Heart left ventricle (tissue), 16 donors: ENCODE measurements at regions of chr10 and their contacts with region 1.

Region 1: GRCh38 chr10:7121154-7121810 is 289.6 kb downstream of the SFMBT2 start:
- DNase-seq: peak in 4 of 5 donors; percentile 28 to 45 (median 40)
- ATAC-seq: peak in 3 of 4 donors; percentile 60 to 66 (median 61)
- H3K4me3 ChIP-seq: no peak overlapping the region
- H3K27ac ChIP-seq: no peak overlapping the region
- H3K4me1 ChIP-seq: peaks cover 0 to 2% (median 0%) of the 10 kb centered on the region in 12 donors
- H3K27me3 ChIP-seq: peaks cover 0 to 12% (median 0%) of the 10 kb centered on the region in 9 donors
- CTCF ChIP-seq: peak; percentile 48 to 75 (median 68)
- POLR2A ChIP-seq: no peak

Region 2: GRCh38 chr10:6920072-6921019 is 200.9 kb before region 1 on chr10:
- intact Hi-C with region 1: loop called in 1 of 10 experiments (anchors 10 kb)
- DNase-seq: peak; percentile 53 to 86 (median 69)
- ATAC-seq: peak; percentile 73 to 95 (median 92)
- H3K4me3 ChIP-seq: peak overlapping the region in 1 of 12 donors; percentile 7
- H3K27ac ChIP-seq: no peak overlapping the region
- H3K4me1 ChIP-seq: peaks cover 0 to 19% (median 1%) of the 10 kb centered on the region in 12 donors
- H3K27me3 ChIP-seq: peaks cover 0 to 3% (median 0%) of the 10 kb centered on the region in 9 donors
- CTCF ChIP-seq: peak; percentile 28 to 69 (median 59)
- POLR2A ChIP-seq: no peak

Region 3: GRCh38 chr10:7102557-7103349 is 18.5 kb before region 1 on chr10:
- intact Hi-C with region 1: no loop called
- DNase-seq: no peak
- ATAC-seq: no peak
- H3K4me3 ChIP-seq: no peak overlapping the region
- H3K27ac ChIP-seq: no peak overlapping the region
- H3K4me1 ChIP-seq: peaks cover 0 to 5% (median 0%) of the 10 kb centered on the region in 12 donors
- H3K27me3 ChIP-seq: peaks cover 0 to 3% (median 0%) of the 10 kb centered on the region in 9 donors
- CTCF ChIP-seq: no peak
- POLR2A ChIP-seq: no peak

Region 4: DNA sequence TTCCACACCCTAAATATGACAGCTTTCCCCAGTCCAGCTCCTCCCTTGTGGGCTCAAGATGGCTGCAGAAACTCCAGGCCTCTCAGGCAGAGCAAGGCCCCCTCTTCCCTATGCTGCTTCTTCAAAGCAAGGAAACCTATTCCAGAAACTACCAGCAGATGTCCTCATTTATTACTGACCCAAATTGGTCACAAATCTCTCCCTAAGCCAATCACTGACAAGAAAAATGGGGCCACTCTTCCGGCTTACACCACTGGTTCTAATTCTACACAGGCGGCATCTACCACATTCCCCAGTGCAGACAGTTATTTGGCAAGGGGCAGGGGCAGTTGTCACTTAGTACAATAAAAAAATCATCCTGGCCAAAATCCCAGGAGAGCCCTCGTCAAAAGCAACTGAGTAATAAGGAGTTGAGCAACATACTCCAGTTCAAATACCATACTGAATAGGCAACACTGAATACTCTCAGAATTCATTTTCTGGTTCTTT is 139.2 kb after region 1 on chr10:
- intact Hi-C with region 1: loop called in 2 of 10 experiments (anchors 10 kb)
- DNase-seq: peak in 4 of 5 donors; percentile 73 to 87 (median 80)
- ATAC-seq: peak; percentile 94 to 96 (median 96)
- H3K4me3 ChIP-seq: no peak overlapping the region
- H3K27ac ChIP-seq: peak overlapping the region; percentile 17 to 72 (median 60)
- H3K4me1 ChIP-seq: peaks cover 3 to 55% (median 26%) of the 10 kb centered on the region in 12 donors
- H3K27me3 ChIP-seq: no peaks in the 10 kb centered on the region
- CTCF ChIP-seq: peak; percentile 65 to 88 (median 78)
- POLR2A ChIP-seq: no peak

Region 5: DNA sequence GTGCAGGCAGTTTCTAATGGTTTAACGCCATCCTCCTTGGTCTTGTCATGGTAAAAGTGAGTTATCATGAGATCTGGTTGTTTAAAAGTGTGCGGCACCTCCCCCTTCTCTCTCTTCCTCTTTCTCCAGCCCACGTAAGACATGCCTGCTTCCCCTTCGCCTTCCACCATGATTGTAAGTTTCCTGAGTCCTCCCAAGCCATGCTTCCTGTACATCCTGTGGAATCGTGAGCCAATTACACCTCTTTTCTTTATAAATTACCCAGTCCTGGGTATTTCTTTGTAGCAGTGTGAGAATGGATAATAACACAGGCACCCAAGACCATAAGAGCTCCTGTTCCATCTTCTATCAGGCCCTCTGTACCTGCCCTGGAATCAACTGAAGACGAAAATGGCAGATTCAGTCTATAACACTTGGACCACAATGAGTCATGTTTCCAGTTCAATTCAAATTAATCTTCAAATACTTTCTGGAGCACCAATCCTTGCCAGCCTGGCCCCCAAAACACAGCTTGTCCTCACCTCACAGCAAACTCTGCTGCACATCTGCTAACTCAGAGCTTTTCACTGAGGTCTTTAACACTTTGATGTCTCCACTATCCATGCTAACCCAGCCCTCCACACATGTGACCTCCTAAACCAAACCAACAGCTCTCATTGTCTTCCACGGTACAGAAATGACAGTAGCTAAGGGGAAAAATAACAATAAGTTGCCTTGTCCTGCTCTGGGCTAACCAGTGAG is 216.3 kb after region 1 on chr10:
- intact Hi-C with region 1: no loop called
- DNase-seq: no peak
- ATAC-seq: peak in 1 of 4 donors; percentile 24
- H3K4me3 ChIP-seq: no peak overlapping the region
- H3K27ac ChIP-seq: peak overlapping the region in 11 of 12 donors; percentile 6 to 64 (median 20)
- H3K4me1 ChIP-seq: peaks cover 0 to 64% (median 30%) of the 10 kb centered on the region in 12 donors
- H3K27me3 ChIP-seq: no peaks in the 10 kb centered on the region
- CTCF ChIP-seq: no peak
- POLR2A ChIP-seq: no peak

Region 6: GRCh38 chr10:7373039-7373438 is 251.8 kb after region 1 on chr10:
- intact Hi-C with region 1: no loop called
- DNase-seq: no peak
- ATAC-seq: no peak
- H3K4me3 ChIP-seq: no peak overlapping the region
- H3K27ac ChIP-seq: no peak overlapping the region
- H3K4me1 ChIP-seq: peaks cover 0 to 7% (median 0%) of the 10 kb centered on the region in 12 donors
- H3K27me3 ChIP-seq: no peaks in the 10 kb centered on the region
- CTCF ChIP-seq: no peak
- POLR2A ChIP-seq: no peak